Heart right ventricle (tissue), 16 donors: ENCODE measurements at regions of chr17 and their contacts with region 1.

Region 1: DNA sequence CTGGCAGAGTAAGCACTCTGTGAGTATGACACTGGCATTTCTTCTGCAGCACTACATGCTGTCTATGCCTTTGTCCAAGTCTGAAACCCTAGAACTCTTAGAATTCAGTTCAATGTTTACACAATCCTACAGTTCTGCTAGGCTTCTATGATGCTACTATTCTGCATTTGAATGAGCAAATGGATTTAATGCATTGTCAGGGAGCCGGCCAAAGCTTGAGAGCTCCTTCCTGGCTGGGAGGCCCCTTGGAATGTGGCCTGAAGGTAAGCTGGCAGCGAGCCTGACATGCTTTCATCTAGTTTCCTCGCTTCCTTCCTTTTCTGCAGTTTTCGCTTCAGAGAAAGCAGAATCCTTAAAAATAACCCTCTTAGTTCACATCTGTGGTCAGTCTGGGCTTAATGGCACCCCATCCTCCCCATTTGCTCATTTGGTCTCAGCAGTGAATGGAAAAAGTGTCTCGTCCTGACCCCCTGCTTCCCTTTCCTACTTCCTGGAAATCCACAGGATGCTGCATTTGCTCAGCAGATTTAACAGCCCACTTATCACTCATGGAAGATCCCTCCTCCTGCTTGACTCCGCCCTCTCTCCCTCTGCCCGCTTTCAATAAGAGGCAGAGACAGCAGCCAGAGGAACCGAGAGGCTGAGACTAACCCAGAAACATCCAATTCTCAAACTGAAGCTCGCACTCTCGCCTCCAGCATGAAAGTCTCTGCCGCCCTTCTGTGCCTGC is at the start of gene CCL2:
- DNase-seq: peak; percentile 60 to 87
- ATAC-seq: peak; percentile 38 to 79 (median 66)
- H3K4me3 ChIP-seq: peak within 1 kb of the TSS; percentile 18 to 67 (median 52)
- H3K27ac ChIP-seq: peak within 1 kb of the TSS in 9 of 10 donors; percentile 58 to 93 (median 82)
- H3K4me1 ChIP-seq: peaks cover 16 to 89% (median 67%) of the 10 kb centered on the region in 9 donors
- H3K27me3 ChIP-seq: no peaks in the 10 kb centered on the region
- CTCF ChIP-seq: no peak
- total RNA-seq, gene CCL2: 2.9 to 264 (median 38.5) TPM

Region 2: GRCh38 chr17:34207572-34207971 is 47.2 kb before region 1 on chr17:
- intact Hi-C with region 1: loop called in 3 of 10 experiments (anchors 2 to 10 kb)
- DNase-seq: no peak
- ATAC-seq: no peak
- H3K4me3 ChIP-seq: no peak overlapping the region
- H3K27ac ChIP-seq: no peak overlapping the region
- H3K4me1 ChIP-seq: peaks cover 0 to 29% (median 13%) of the 10 kb centered on the region in 9 donors
- H3K27me3 ChIP-seq: no peaks in the 10 kb centered on the region
- CTCF ChIP-seq: no peak

Region 3: DNA sequence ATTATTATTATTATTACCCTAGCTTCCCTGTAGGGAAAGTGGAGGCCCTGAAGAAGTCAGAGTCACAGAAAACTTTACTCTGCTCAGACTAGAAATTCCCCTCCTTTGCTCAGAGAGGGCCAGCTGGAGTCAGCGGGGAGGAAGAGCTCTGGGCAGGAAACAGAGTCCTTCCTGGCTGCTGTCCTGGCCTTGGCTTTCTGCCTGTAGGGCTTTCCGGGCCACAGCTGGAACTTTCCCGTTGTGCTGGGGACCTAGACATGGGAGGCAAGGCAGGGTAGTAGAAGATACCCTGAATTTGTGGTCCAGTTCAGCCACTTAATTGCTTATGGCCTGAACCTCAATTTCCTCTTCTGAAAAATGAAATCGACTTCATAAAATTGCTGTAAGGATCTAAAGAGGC is 13.8 kb before region 1 on chr17:
- intact Hi-C with region 1: loop called in 1 of 10 experiments (anchors 2 kb)
- DNase-seq: peak; percentile 85 to 88
- ATAC-seq: peak; percentile 72 to 90 (median 88)
- H3K4me3 ChIP-seq: no peak overlapping the region
- H3K27ac ChIP-seq: peak overlapping the region in 9 of 10 donors; percentile 23 to 93 (median 68)
- H3K4me1 ChIP-seq: peaks cover 6 to 100% (median 75%) of the 10 kb centered on the region in 9 donors
- H3K27me3 ChIP-seq: no peaks in the 10 kb centered on the region
- CTCF ChIP-seq: no peak

Region 4: DNA sequence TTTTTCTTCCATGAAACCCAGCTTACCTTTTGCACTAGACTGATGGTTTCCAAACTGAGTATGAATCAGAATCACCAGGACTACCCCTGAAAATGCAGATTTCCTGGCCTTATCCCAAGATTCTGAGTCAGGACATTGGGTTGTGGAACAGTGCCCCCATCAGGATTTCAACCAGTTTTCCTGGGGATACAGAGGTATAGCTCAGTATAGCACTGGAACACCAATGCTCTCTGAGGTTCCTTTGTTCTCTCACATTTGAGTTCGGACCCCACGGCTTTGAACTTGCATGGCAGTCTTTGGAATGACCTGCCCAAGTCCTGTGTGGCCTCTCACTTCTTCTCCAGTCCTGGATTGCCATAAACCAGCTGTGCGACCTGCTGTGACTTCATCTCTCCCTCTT is 51.6 kb after region 1 on chr17:
- intact Hi-C with region 1: loop called in 6 of 10 experiments (anchors 5 kb)
- DNase-seq: peak in 1 of 2 donors; percentile 48
- ATAC-seq: peak; percentile 68 to 86 (median 80)
- H3K4me3 ChIP-seq: no peak overlapping the region
- H3K27ac ChIP-seq: peak overlapping the region in 5 of 10 donors; percentile 2 to 69 (median 30)
- H3K4me1 ChIP-seq: peaks cover 0 to 64% (median 32%) of the 10 kb centered on the region in 9 donors
- H3K27me3 ChIP-seq: peaks cover 0 to 5% (median 0%) of the 10 kb centered on the region in 7 donors
- CTCF ChIP-seq: peak in 8 of 9 donors; percentile 45 to 69 (median 55)